HCT116 (cell line): ENCODE measurements at regions of chr4 and their contacts with region 1.

Region 1: GRCh38 chr4:83639849-83640493 is 104.1 kb downstream of the GPAT3 start:
- DNase-seq: peak; percentile 71
- ATAC-seq: peak; percentile 86
- H3K4me3 ChIP-seq: no peak overlapping the region
- H3K27ac ChIP-seq: no peak overlapping the region
- H3K4me1 ChIP-seq: no peaks in the 10 kb centered on the region
- H3K27me3 ChIP-seq: no peaks in the 10 kb centered on the region
- CTCF ChIP-seq: peak; percentile 68 to 90 (median 85)
- POLR2A ChIP-seq: no peak
- RAD21 ChIP-seq: peak; percentile 96

Region 2: GRCh38 chr4:83362492-83363329 is 277.3 kb before region 1 on chr4:
- CTCF ChIA-PET with region 1: no interaction called
- POLR2A ChIA-PET with region 1: no interaction called
- RAD21 ChIA-PET with region 1: no interaction called
- intact Hi-C with region 1: loop called (anchors 1 kb)
- DNase-seq: no peak
- ATAC-seq: peak; percentile 94
- H3K4me3 ChIP-seq: no peak overlapping the region
- H3K27ac ChIP-seq: no peak overlapping the region
- H3K4me1 ChIP-seq: peaks cover 4 to 8% of the 10 kb centered on the region in 2 experiments
- H3K27me3 ChIP-seq: no peaks in the 10 kb centered on the region
- CTCF ChIP-seq: peak; percentile 40 to 56 (median 54); a peak in 5 of 6 replicates
- POLR2A ChIP-seq: no peak
- RAD21 ChIP-seq: peak; percentile 71

Region 3: GRCh38 chr4:83490876-83491450 is 149.0 kb before region 1 on chr4:
- CTCF ChIA-PET with region 1: interaction called, 6 read pairs
- POLR2A ChIA-PET with region 1: no interaction called
- RAD21 ChIA-PET with region 1: no interaction called
- intact Hi-C with region 1: loop called (anchors 5 kb)
- DNase-seq: peak; percentile 42
- ATAC-seq: peak; percentile 77
- H3K4me3 ChIP-seq: no peak overlapping the region
- H3K27ac ChIP-seq: no peak overlapping the region
- H3K4me1 ChIP-seq: no peaks in the 10 kb centered on the region
- H3K27me3 ChIP-seq: no peaks in the 10 kb centered on the region
- CTCF ChIP-seq: peak; percentile 73 to 96 (median 90); a peak in 5 of 6 replicates
- POLR2A ChIP-seq: no peak
- RAD21 ChIP-seq: peak; percentile 75

Region 4: GRCh38 chr4:83503974-83504373 is 136.0 kb before region 1 on chr4:
- CTCF ChIA-PET with region 1: interaction called, 10 read pairs
- POLR2A ChIA-PET with region 1: no interaction called
- RAD21 ChIA-PET with region 1: no interaction called
- intact Hi-C with region 1: loop called (anchors 1 kb)
- DNase-seq: no peak
- ATAC-seq: no peak
- H3K4me3 ChIP-seq: no peak overlapping the region
- H3K27ac ChIP-seq: no peak overlapping the region
- H3K4me1 ChIP-seq: no peaks in the 10 kb centered on the region
- H3K27me3 ChIP-seq: no peaks in the 10 kb centered on the region
- CTCF ChIP-seq: no peak
- POLR2A ChIP-seq: no peak
- RAD21 ChIP-seq: no peak

Region 5: GRCh38 chr4:83780053-83780728 is 140.2 kb after region 1 on chr4:
- CTCF ChIA-PET with region 1: no interaction called
- POLR2A ChIA-PET with region 1: no interaction called
- RAD21 ChIA-PET with region 1: no interaction called
- intact Hi-C with region 1: no loop called
- DNase-seq: no peak
- ATAC-seq: peak; percentile 58
- H3K4me3 ChIP-seq: no peak overlapping the region
- H3K27ac ChIP-seq: no peak overlapping the region
- H3K4me1 ChIP-seq: peaks cover 0 to 13% of the 10 kb centered on the region in 2 experiments; a peak in 2 of 4 replicates
- H3K27me3 ChIP-seq: no peaks in the 10 kb centered on the region
- CTCF ChIP-seq: peak; percentile 6 to 50 (median 35); a peak in 3 of 6 replicates
- POLR2A ChIP-seq: no peak
- RAD21 ChIP-seq: peak; percentile 64

Region 6: DNA sequence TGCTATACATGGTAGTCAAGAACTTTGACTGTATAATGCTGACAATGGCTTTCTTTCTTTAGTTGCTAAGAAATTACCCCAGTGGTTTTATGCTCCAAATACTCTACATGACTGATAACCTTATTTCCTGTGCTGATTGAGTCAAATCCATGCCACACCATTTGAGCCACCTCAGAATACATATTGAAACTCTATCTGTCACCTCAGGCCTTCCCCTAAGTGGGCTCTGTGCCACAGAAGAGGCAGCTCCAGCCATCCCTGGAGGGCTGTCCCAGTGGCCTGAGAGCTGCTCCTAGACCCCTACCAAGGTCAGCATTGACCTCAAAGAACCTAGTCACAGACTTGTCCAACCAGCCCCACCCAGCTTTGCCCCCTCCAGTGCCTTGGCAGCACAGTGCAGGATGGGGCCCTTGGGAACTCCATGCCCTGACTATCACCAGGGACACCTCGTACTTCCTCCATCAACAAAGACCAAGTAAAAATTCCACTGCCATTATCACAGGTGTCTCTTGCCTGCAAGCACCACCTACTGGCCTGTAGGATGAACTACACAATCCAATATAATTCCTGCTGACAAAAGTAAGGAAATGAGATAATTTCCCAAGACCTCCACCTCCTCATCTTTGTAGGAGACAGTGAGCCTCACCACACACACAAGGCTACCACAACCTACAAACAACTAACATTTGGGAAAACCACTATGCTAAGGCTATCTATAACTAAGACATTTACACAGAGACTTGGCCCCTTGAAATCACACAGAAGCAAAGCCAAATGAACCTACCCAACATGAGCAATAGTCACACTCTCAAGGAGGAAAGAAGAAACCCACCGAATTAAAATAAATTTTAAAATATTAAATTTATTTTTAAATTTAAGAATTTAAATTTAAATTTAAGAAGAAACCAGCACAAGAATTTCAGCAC is 619.2 kb after region 1 on chr4:
- CTCF ChIA-PET with region 1: no interaction called
- POLR2A ChIA-PET with region 1: no interaction called
- RAD21 ChIA-PET with region 1: no interaction called
- intact Hi-C with region 1: loop called (anchors 5 kb)
- DNase-seq: peak; percentile 13
- ATAC-seq: peak; percentile 78
- H3K4me3 ChIP-seq: no peak overlapping the region
- H3K27ac ChIP-seq: no peak overlapping the region
- H3K4me1 ChIP-seq: no peaks in the 10 kb centered on the region
- H3K27me3 ChIP-seq: no peaks in the 10 kb centered on the region
- CTCF ChIP-seq: peak; percentile 48 to 82 (median 76); a peak in 5 of 6 replicates
- POLR2A ChIP-seq: no peak
- RAD21 ChIP-seq: peak; percentile 72

Region 7: DNA sequence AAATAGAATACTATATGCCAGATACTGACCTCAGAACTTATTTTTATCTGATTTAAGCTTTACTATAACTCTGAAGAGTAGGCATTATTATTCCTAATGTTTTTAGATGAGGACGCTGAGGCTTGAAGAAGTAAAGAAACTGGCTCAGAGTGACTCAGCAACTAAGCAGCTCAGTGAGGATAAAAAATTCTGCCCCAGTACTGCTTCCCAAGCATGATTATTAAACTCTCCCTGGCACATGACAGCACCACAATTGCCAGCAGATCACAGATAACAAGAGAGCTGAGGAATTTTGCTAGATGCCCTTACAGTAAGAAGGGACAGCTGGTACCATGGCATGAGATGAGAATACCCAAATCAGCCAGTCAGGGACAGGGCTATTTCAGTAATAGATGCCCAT is 639.7 kb after region 1 on chr4:
- CTCF ChIA-PET with region 1: no interaction called
- POLR2A ChIA-PET with region 1: no interaction called
- RAD21 ChIA-PET with region 1: no interaction called
- intact Hi-C with region 1: no loop called
- DNase-seq: no peak
- ATAC-seq: no peak
- H3K4me3 ChIP-seq: no peak overlapping the region
- H3K27ac ChIP-seq: no peak overlapping the region
- H3K4me1 ChIP-seq: no peaks in the 10 kb centered on the region
- H3K27me3 ChIP-seq: no peaks in the 10 kb centered on the region
- CTCF ChIP-seq: no peak
- POLR2A ChIP-seq: no peak
- RAD21 ChIP-seq: no peak

Region 8: GRCh38 chr4:84966383-84967242 is 1326.6 kb after region 1 on chr4 and contains the start of gene WDFY3:
- CTCF ChIA-PET with region 1: interaction called, 3 read pairs
- POLR2A ChIA-PET with region 1: no interaction called
- RAD21 ChIA-PET with region 1: no interaction called
- intact Hi-C with region 1: loop called (anchors 10 kb)
- DNase-seq: peak; percentile 71
- ATAC-seq: peak; percentile 89
- H3K4me3 ChIP-seq: peak within 1 kb of the TSS; percentile 56 to 79
- H3K27ac ChIP-seq: peak within 1 kb of the TSS; percentile 88
- H3K4me1 ChIP-seq: peaks cover 4 to 18% of the 10 kb centered on the region in 2 experiments; a peak in 3 of 4 replicates
- H3K27me3 ChIP-seq: no peaks in the 10 kb centered on the region
- CTCF ChIP-seq: no peak
- POLR2A ChIP-seq: peak; percentile 43
- RAD21 ChIP-seq: 0 out of 2 replicates have a peak, but pooled peaks have one; percentile 18
- total RNA-seq, gene WDFY3: 39.9 TPM